ENCODE measurements at regions of chr6 and their contacts with region 1.

Region 1: DNA sequence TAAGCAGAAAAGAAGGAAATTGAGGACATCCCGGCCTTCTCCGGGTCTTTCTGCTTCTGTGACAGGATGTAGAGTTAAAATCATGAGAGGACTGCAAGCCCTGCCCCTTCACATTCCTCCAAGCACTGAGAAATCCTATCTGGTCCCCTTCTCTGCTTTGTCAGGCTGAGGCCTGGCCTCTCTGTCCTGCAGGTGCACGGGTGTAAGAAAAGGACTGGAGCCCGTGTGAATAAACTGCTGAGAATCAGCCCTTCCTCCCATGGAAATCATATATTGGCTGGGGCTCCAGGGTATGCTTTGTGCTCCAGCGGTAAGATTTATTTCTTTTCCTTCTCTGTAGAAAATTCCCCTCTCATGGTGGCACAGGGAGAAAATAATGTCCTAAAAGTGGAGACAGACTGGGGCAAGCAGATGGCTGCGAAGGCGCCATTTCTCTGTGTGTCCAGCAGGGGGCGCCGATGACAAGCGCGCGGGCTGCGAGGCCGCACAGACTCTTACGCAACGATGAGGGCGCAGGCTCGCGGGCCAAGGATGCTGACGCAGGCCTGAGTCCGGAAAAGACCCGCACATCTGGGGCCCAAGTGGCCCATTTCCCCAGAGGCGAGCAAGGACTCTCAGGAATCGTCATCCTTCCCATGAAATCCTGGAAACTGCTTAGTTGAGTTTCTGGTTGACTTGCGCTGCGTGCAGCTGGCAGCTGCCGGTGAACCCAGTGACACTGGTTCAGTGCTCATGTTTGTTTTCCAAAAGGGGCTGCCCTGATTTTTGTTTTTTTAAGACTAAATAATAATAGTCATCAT is 258.6 kb downstream of the ADGB start:
- DNase-seq: no peak
- ATAC-seq: peak; percentile 99
- H3K4me3 ChIP-seq: peak overlapping the region; percentile 59; the same call in 1 of the 2 replicates
- H3K27ac ChIP-seq: no peak overlapping the region
- H3K4me1 ChIP-seq: no peaks in the 10 kb centered on the region; the same call in 1 of the 2 replicates
- H3K27me3 ChIP-seq: no peaks in the 10 kb centered on the region; a peak in 1 of 4 replicates
- CTCF ChIP-seq: peak; percentile 96 to 97 (median 96); a peak in 5 of 6 replicates
- EP300 ChIP-seq: no peak
- POLR2A ChIP-seq: no peak
- RAD21 ChIP-seq: peak; percentile 87

Region 2: GRCh38 chr6:147285087-147285855 is 427.9 kb after region 1 on chr6:
- CTCF ChIA-PET with region 1: interaction called, 4 read pairs
- POLR2A ChIA-PET with region 1: no interaction called
- RAD21 ChIA-PET with region 1: no interaction called
- SMC1A ChIA-PET with region 1: interaction called, 3 read pairs
- in situ Hi-C with region 1: loop called (anchors 10 kb)
- intact Hi-C with region 1: loop called (anchors 2 kb)
- DNase-seq: no peak
- ATAC-seq: peak; percentile 73
- H3K4me3 ChIP-seq: no peak overlapping the region
- H3K27ac ChIP-seq: no peak overlapping the region
- H3K4me1 ChIP-seq: no peaks in the 10 kb centered on the region
- H3K27me3 ChIP-seq: no peaks in the 10 kb centered on the region
- CTCF ChIP-seq: peak; percentile 19 to 53 (median 35); a peak in 4 of 6 replicates
- EP300 ChIP-seq: no peak
- POLR2A ChIP-seq: no peak
- RAD21 ChIP-seq: peak; percentile 53

Region 3: GRCh38 chr6:147382945-147383554 is 525.7 kb after region 1 on chr6:
- CTCF ChIA-PET with region 1: no interaction called
- POLR2A ChIA-PET with region 1: no interaction called
- RAD21 ChIA-PET with region 1: no interaction called
- SMC1A ChIA-PET with region 1: no interaction called
- in situ Hi-C with region 1: no loop called
- intact Hi-C with region 1: loop called (anchors 10 kb)
- DNase-seq: no peak
- ATAC-seq: 0 out of 3 replicates have a peak, but pooled peaks have one; percentile 9
- H3K4me3 ChIP-seq: no peak overlapping the region
- H3K27ac ChIP-seq: no peak overlapping the region
- H3K4me1 ChIP-seq: peaks cover 3% of the 10 kb centered on the region; the same call in 1 of the 2 replicates
- H3K27me3 ChIP-seq: no peaks in the 10 kb centered on the region
- CTCF ChIP-seq: peak; percentile 10 to 27 (median 16); a peak in 3 of 6 replicates
- EP300 ChIP-seq: no peak
- POLR2A ChIP-seq: no peak
- RAD21 ChIP-seq: no peak

Measured in GM12878 (cell line).